A673 (cell line): ENCODE measurements at regions of chr2 and their contacts with region 1.

Region 1: GRCh38 chr2:172896661-172897081 is 161.0 kb downstream of the RAPGEF4 start:
- DNase-seq: no peak
- H3K4me3 ChIP-seq: no peak overlapping the region
- H3K27ac ChIP-seq: no peak overlapping the region
- H3K4me1 ChIP-seq: no peaks in the 10 kb centered on the region
- H3K27me3 ChIP-seq: peaks cover 82% of the 10 kb centered on the region
- CTCF ChIP-seq: no peak

Region 2: GRCh38 chr2:172855588-172855987 is 41.1 kb before region 1 on chr2:
- CTCF ChIA-PET with region 1: interaction called, 11 read pairs
- POLR2A ChIA-PET with region 1: no interaction called
- intact Hi-C with region 1: no loop called
- DNase-seq: no peak
- H3K4me3 ChIP-seq: no peak overlapping the region
- H3K27ac ChIP-seq: no peak overlapping the region
- H3K4me1 ChIP-seq: no peaks in the 10 kb centered on the region
- H3K27me3 ChIP-seq: peaks cover 20% of the 10 kb centered on the region
- CTCF ChIP-seq: no peak